ENCODE measurements at regions of chr1 and their contacts with region 1.

Region 1: DNA sequence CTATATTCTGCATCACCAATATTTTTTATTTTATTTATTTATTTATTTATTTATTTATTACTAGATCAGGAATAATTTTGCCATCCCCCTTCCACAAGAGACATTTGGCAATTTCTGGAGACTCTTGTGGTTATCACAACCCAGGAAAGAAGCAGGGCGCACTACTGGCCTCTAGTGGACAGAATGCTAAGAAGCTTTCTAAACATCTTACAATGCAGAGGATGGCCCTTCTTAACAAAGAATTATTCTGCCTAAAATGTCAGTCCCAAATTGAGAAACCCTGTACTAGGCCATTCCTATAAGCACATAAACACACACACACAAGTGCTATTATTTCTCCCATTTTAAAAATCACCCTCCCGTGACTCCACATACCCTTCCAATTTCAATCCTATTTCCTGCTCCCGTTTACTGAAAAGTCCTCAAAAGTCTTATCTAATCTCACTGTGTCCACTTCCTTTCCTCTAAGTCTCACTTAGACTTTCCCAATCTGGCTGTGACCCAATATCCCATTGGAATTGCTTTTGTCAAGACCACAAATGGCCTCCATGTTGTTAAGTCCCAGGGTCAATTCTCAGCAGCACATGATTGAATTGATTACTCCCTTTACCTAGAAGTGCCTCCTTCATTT is 43.7 kb upstream of the RNF11 start:
- DNase-seq: peak in 4 of 5 donors; percentile 47 to 52 (median 50)
- ATAC-seq: peak in 3 of 4 donors; percentile 30 to 69 (median 61)
- H3K4me3 ChIP-seq: no peak overlapping the region
- H3K27ac ChIP-seq: no peak overlapping the region
- H3K4me1 ChIP-seq: no peaks in the 10 kb centered on the region
- H3K27me3 ChIP-seq: no peaks in the 10 kb centered on the region
- CTCF ChIP-seq: peak; percentile 68 to 93 (median 84)
- POLR2A ChIP-seq: no peak

Region 2: GRCh38 chr1:50368179-50369012 is 823.9 kb before region 1 on chr1:
- intact Hi-C with region 1: loop called in 1 of 10 experiments (anchors 5 kb)
- DNase-seq: no peak
- ATAC-seq: peak in 3 of 4 donors; percentile 42 to 53 (median 52)
- H3K4me3 ChIP-seq: no peak overlapping the region
- H3K27ac ChIP-seq: no peak overlapping the region
- H3K4me1 ChIP-seq: peaks cover 0 to 5% (median 0%) of the 10 kb centered on the region in 12 donors
- H3K27me3 ChIP-seq: peaks cover 4 to 39% (median 10%) of the 10 kb centered on the region in 9 donors
- CTCF ChIP-seq: peak; percentile 54 to 82 (median 70)
- POLR2A ChIP-seq: no peak

Region 3: GRCh38 chr1:50787266-50787665 is 405.1 kb before region 1 on chr1:
- intact Hi-C with region 1: loop called in 1 of 10 experiments (anchors 5 kb)
- DNase-seq: no peak
- ATAC-seq: no peak
- H3K4me3 ChIP-seq: no peak overlapping the region
- H3K27ac ChIP-seq: peak overlapping the region in 1 of 12 donors; percentile 29
- H3K4me1 ChIP-seq: no peaks in the 10 kb centered on the region
- H3K27me3 ChIP-seq: no peaks in the 10 kb centered on the region
- CTCF ChIP-seq: no peak
- POLR2A ChIP-seq: no peak

Region 4: GRCh38 chr1:50929376-50929958 is 262.9 kb before region 1 on chr1:
- intact Hi-C with region 1: loop called in 4 of 10 experiments (anchors 5 to 10 kb)
- DNase-seq: no peak
- ATAC-seq: no peak
- H3K4me3 ChIP-seq: no peak overlapping the region
- H3K27ac ChIP-seq: no peak overlapping the region
- H3K4me1 ChIP-seq: peaks cover 0 to 14% (median 1%) of the 10 kb centered on the region in 12 donors
- H3K27me3 ChIP-seq: no peaks in the 10 kb centered on the region
- CTCF ChIP-seq: peak; percentile 39 to 71 (median 53)
- POLR2A ChIP-seq: no peak

Region 5: DNA sequence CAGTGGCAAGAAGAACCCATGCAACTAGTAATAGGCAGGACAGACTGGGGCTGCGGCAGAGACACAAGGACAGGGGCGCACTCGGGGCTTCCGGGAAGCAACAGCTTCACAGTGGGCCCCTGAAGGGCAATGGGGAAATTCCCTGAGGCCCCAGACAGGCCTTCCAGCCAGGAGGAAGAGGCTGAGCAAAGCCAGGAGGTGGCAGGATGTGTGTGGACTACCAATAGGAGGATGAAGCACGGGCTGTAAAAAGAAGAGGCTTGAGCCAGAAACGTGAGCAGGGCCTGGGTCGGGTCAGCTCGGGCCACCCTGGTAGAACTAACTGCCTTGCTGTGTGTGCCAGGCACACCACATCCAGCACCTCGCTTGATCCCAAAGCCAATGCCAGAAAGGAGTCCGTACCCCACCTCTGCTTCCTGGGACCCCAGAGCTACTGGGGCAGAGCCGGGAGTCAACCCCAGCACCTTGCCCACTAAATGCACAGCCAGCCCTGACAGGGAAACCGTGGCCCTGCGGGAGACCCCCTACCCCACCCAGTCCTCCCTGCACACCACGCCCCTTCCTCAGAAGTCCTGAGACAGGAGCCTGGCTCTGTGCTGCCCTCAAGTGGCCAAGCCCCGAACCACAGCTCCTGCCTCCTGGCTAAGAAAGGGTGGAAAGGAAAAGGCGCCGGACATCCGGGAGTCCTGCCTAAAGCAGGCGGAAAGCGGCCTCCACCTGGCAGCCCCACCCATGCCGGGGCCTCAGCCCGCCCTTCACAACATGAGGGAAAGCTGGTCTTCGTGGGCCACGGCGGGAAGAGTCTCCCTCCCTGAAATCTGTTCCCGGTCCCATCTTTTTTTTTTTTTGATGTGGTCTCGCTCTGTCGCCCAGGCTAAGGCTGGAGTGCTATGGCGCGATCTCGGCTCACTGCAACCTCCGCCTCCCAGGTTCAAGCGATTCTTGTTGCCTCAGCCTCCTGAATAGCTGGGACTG is 104.3 kb after region 1 on chr1:
- intact Hi-C with region 1: loop called in 7 of 10 experiments (anchors 2 to 10 kb)
- DNase-seq: peak; percentile 81 to 90 (median 84)
- ATAC-seq: peak; percentile 65 to 87 (median 84)
- H3K4me3 ChIP-seq: peak overlapping the region in 11 of 12 donors; percentile 19 to 74 (median 51)
- H3K27ac ChIP-seq: peak overlapping the region in 4 of 12 donors; percentile 1 to 27 (median 8)
- H3K4me1 ChIP-seq: peaks cover 0 to 16% (median 11%) of the 10 kb centered on the region in 12 donors
- H3K27me3 ChIP-seq: no peaks in the 10 kb centered on the region
- CTCF ChIP-seq: peak; percentile 93 to 99 (median 97)
- POLR2A ChIP-seq: no peak

Region 6: DNA sequence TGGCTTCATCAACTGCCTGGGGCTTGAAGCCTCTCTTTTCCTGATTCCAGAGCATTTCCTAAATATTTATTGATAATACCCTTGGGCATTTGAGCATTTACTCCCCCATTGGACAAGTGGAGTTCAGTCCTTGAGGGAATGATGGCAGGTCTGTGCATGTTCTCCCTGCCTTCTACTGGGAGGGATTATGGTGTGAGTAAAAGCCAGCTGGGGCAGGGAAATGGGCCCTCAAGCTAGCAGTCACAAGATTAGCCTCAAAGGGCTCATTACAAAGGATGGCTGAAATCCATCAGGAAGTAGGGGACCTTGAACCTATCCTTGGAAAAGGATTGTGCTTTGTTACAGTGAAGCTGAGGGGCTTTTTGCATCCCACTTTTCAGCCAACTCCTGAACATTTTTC is 400.4 kb after region 1 on chr1:
- intact Hi-C with region 1: no loop called
- DNase-seq: no peak
- ATAC-seq: no peak
- H3K4me3 ChIP-seq: no peak overlapping the region
- H3K27ac ChIP-seq: no peak overlapping the region
- H3K4me1 ChIP-seq: no peaks in the 10 kb centered on the region
- H3K27me3 ChIP-seq: no peaks in the 10 kb centered on the region
- CTCF ChIP-seq: no peak
- POLR2A ChIP-seq: no peak

Measured in heart left ventricle (tissue), 16 donors.